ENCODE measurements at regions of chr1 and their contacts with region 1.

Region 1: DNA sequence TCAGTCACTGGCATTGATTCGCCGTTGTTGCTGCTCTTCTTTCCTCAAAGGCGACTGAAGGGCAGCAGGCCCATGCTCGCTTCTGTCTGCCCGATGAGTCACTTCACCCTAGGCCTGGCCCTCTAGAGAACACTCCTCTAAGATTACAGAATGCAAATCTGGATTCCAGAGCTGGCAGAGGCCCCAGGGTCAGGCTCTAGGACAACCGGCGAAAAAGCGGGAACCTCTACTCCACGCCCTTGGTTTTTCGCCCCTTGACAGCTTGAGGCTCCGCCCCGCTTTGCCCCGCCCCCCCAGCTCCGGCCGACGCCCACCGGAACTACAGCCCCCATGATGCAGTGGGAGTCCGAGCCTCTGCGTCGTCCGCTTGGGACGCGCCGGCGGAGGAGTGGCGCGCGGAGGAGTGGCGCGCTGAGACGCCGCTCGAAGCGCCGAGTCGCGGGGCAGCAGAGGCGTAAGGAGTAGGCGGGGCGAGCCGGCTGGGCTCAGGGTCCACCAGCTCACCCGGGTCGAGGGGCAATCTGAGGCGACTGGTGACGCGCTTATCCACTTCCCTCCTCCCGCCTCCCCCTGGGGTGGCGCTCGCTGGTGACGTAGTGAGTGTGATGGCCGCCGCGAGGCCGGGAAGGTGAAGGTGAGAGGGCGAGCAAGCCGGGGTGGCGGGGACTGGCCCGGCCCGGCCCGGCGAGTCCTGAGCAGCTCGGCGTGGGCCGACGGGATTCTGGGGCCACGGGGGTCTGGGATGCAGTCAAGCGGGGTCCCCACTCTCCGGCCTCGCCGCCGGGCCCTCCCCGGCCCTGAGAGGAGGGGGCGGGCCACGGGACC is at the start of gene MFN2:
- DNase-seq: peak; percentile 87 to 97 (median 92)
- ATAC-seq: peak; percentile 89
- H3K4me3 ChIP-seq: peak within 1 kb of the TSS; percentile 70 to 94
- H3K4me3 Mint-ChIP-seq: peak within 1 kb of the TSS; percentile 89
- H3K27ac ChIP-seq: peak within 1 kb of the TSS; percentile 91 to 95
- H3K27ac Mint-ChIP-seq: peak within 1 kb of the TSS; percentile 95
- H3K4me1 ChIP-seq: peaks cover 23% of the 10 kb centered on the region
- H3K4me1 Mint-ChIP-seq: peaks cover 43% of the 10 kb centered on the region
- H3K27me3 ChIP-seq: no peaks in the 10 kb centered on the region
- H3K27me3 Mint-ChIP-seq: no peaks in the 10 kb centered on the region
- CTCF ChIP-seq: no peak
- total RNA-seq, gene MFN2: 41.7 to 46.0 TPM

Region 2: GRCh38 chr1:11925938-11926292 is 54.1 kb before region 1 on chr1:
- CTCF ChIA-PET with region 1: no interaction called
- POLR2A ChIA-PET with region 1: interaction called, 3 read pairs
- intact Hi-C with region 1: loop called (anchors 1 kb)
- DNase-seq: peak in 2 of 9 experiments; percentile 12 to 20
- ATAC-seq: peak; percentile 34
- H3K4me3 ChIP-seq: peak overlapping the region in 1 of 2 experiments; percentile 26
- H3K4me3 Mint-ChIP-seq: peak overlapping the region; percentile 86
- H3K27ac ChIP-seq: no peak overlapping the region
- H3K27ac Mint-ChIP-seq: no peak overlapping the region
- H3K4me1 ChIP-seq: peaks cover 34% of the 10 kb centered on the region
- H3K4me1 Mint-ChIP-seq: peaks cover 29% of the 10 kb centered on the region
- H3K27me3 ChIP-seq: no peaks in the 10 kb centered on the region
- H3K27me3 Mint-ChIP-seq: no peaks in the 10 kb centered on the region
- CTCF ChIP-seq: no peak

Region 3: DNA sequence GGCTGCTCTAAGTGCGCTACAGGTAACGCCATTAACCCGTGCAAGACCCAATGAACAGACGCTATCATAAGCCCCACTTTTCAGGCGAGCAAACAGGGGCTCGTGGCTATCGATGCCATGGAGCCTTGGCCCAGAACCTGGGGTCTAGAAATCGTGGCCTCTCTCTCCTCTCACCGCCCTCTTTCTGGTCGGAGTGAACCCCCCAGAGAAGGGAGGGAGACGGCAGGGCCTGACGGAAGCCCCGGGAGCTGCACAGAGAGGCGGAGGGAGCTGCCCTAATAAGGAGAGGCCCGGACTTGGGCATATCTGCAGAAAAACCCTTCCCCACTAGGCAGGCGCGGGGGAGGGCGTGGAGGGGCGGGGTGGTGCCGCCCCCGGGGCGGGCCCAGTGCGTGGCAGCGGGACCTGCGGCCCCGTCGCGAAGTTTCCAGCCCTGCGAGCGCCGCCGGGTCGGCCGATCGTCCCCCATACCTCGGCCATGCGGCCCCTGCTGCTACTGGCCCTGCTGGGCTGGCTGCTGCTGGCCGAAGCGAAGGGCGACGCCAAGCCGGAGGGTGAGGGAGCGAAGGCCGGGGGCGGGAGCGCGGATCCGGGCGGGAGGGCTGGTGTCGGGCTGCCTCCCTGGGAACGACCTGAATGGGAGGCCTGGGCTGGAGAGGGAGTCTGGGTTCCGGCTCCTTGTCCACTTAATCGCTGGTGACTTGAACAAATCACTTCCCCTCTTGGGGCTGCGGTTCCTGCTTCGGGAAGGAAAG is 45.6 kb before region 1 on chr1 and contains the start of gene PLOD1:
- CTCF ChIA-PET with region 1: no interaction called
- POLR2A ChIA-PET with region 1: no interaction called
- intact Hi-C with region 1: loop called (anchors 1 kb)
- DNase-seq: peak; percentile 74 to 91 (median 85)
- ATAC-seq: peak; percentile 100
- H3K4me3 ChIP-seq: peak within 1 kb of the TSS; percentile 63 to 71
- H3K4me3 Mint-ChIP-seq: peak within 1 kb of the TSS; percentile 84
- H3K27ac ChIP-seq: peak within 1 kb of the TSS; percentile 26 to 45
- H3K27ac Mint-ChIP-seq: no peak within 1 kb of the TSS
- H3K4me1 ChIP-seq: peaks cover 11% of the 10 kb centered on the region
- H3K4me1 Mint-ChIP-seq: peaks cover 7% of the 10 kb centered on the region
- H3K27me3 ChIP-seq: no peaks in the 10 kb centered on the region
- H3K27me3 Mint-ChIP-seq: no peaks in the 10 kb centered on the region
- CTCF ChIP-seq: no peak
- total RNA-seq, gene PLOD1: 2.0 to 2.4 TPM

Region 4: GRCh38 chr1:12019858-12020509 is 39.9 kb after region 1 on chr1:
- CTCF ChIA-PET with region 1: no interaction called
- POLR2A ChIA-PET with region 1: interaction called, 4 read pairs
- intact Hi-C with region 1: loop called (anchors 1 kb)
- DNase-seq: peak in 2 of 9 experiments; percentile 3 to 27
- ATAC-seq: no peak
- H3K4me3 ChIP-seq: peak overlapping the region; percentile 69 to 94
- H3K4me3 Mint-ChIP-seq: peak overlapping the region; percentile 90
- H3K27ac ChIP-seq: peak overlapping the region; percentile 48 to 59
- H3K27ac Mint-ChIP-seq: peak overlapping the region; percentile 45
- H3K4me1 ChIP-seq: peaks cover 11% of the 10 kb centered on the region
- H3K4me1 Mint-ChIP-seq: peaks cover 15% of the 10 kb centered on the region
- H3K27me3 ChIP-seq: no peaks in the 10 kb centered on the region
- H3K27me3 Mint-ChIP-seq: no peaks in the 10 kb centered on the region
- CTCF ChIP-seq: no peak

Region 5: GRCh38 chr1:12407050-12407961 is 427.2 kb after region 1 on chr1:
- CTCF ChIA-PET with region 1: no interaction called
- POLR2A ChIA-PET with region 1: no interaction called
- intact Hi-C with region 1: no loop called
- DNase-seq: peak in 3 of 9 experiments; percentile 19 to 65 (median 50)
- ATAC-seq: peak; percentile 55
- H3K4me3 ChIP-seq: no peak overlapping the region
- H3K4me3 Mint-ChIP-seq: no peak overlapping the region
- H3K27ac ChIP-seq: no peak overlapping the region
- H3K27ac Mint-ChIP-seq: no peak overlapping the region
- H3K4me1 ChIP-seq: peaks cover 8% of the 10 kb centered on the region
- H3K4me1 Mint-ChIP-seq: peaks cover 20% of the 10 kb centered on the region
- H3K27me3 ChIP-seq: no peaks in the 10 kb centered on the region
- H3K27me3 Mint-ChIP-seq: no peaks in the 10 kb centered on the region
- CTCF ChIP-seq: peak; percentile 41

Measured in CD8-positive, alpha-beta T cell (primary cell).